CD14-positive monocyte (primary cell): ENCODE measurements at regions of chr7 and their contacts with region 1.

Region 1: GRCh38 chr7:55280031-55280454 is 85.1 kb upstream of the LANCL2 start:
- DNase-seq: peak; percentile 18 to 41 (median 26)
- H3K4me3 ChIP-seq: no peak overlapping the region
- H3K4me3 Mint-ChIP-seq: no peak overlapping the region
- H3K27ac ChIP-seq: no peak overlapping the region
- H3K27ac Mint-ChIP-seq: no peak overlapping the region
- H3K4me1 ChIP-seq: no peaks in the 10 kb centered on the region
- H3K4me1 Mint-ChIP-seq: no peaks in the 10 kb centered on the region
- H3K27me3 ChIP-seq: no peaks in the 10 kb centered on the region
- H3K27me3 Mint-ChIP-seq: peaks cover 0 to 5% (median 0%) of the 10 kb centered on the region in 3 donors
- CTCF ChIP-seq: peak; percentile 58

Region 2: DNA sequence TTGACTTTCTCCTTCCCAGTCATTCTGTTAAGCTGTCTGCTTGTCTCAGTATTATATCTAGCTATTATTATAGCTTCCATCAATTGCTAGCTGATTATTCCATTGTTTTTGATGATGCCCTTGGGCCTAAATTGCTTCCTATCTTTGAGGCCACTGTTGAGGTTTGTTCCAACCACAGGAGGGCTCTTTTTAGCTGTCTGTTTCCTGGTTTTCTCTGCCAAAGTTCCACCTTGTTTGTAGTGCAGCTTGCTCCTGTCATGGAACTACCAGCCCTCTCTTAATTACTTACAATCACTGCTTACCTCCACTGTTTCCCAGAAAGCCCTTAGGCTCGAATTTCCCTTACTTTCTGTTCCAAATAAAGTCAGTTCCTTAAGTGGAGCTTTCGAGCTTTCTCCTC is 402.4 kb before region 1 on chr7:
- intact Hi-C with region 1: no loop called
- DNase-seq: no peak
- H3K4me3 ChIP-seq: no peak overlapping the region
- H3K4me3 Mint-ChIP-seq: no peak overlapping the region
- H3K27ac ChIP-seq: no peak overlapping the region
- H3K27ac Mint-ChIP-seq: no peak overlapping the region
- H3K4me1 ChIP-seq: no peaks in the 10 kb centered on the region
- H3K4me1 Mint-ChIP-seq: no peaks in the 10 kb centered on the region
- H3K27me3 ChIP-seq: no peaks in the 10 kb centered on the region
- H3K27me3 Mint-ChIP-seq: no peaks in the 10 kb centered on the region
- CTCF ChIP-seq: no peak

Region 3: GRCh38 chr7:55409482-55410225 is 129.6 kb after region 1 on chr7:
- intact Hi-C with region 1: loop called (anchors 2 to 5 kb)
- DNase-seq: no peak
- H3K4me3 ChIP-seq: no peak overlapping the region
- H3K4me3 Mint-ChIP-seq: no peak overlapping the region
- H3K27ac ChIP-seq: peak overlapping the region in 1 of 2 donors; percentile 14
- H3K27ac Mint-ChIP-seq: peak overlapping the region in 1 of 7 donors; percentile 23
- H3K4me1 ChIP-seq: no peaks in the 10 kb centered on the region
- H3K4me1 Mint-ChIP-seq: no peaks in the 10 kb centered on the region
- H3K27me3 ChIP-seq: no peaks in the 10 kb centered on the region
- H3K27me3 Mint-ChIP-seq: peaks cover 0 to 2% (median 0%) of the 10 kb centered on the region in 3 donors
- CTCF ChIP-seq: no peak

Region 4: DNA sequence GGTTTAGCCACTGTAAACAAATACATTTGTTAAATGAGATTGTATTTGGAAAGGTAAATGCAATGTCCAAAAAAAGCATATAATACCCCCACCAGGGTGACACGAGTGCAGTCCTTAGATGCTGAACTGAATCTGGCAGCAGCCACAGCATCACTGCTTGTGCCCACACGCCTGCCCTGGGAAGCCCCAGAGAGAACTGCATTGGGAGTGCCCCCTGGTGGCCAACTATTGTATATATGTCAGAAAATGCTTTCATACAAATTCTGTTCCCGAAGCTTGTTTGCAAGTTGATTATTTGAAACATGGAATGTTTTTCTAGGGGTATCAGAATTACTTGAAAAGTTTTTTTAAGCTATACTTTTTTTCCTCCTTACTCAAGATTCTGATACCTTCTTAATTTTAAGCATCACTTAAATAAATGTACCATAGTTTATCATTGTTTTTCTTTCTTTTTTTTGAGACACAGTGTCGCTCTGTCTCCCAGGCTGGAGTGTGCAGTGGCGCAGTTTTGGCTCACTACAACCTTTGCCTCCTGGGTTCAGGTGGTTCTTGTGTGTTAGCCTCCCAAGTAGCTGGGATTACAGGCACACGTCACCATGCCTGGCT is 135.2 kb after region 1 on chr7:
- intact Hi-C with region 1: loop called (anchors 2 to 5 kb)
- DNase-seq: peak; percentile 47 to 68 (median 68)
- H3K4me3 ChIP-seq: no peak overlapping the region
- H3K4me3 Mint-ChIP-seq: no peak overlapping the region
- H3K27ac ChIP-seq: no peak overlapping the region
- H3K27ac Mint-ChIP-seq: no peak overlapping the region
- H3K4me1 ChIP-seq: no peaks in the 10 kb centered on the region
- H3K4me1 Mint-ChIP-seq: no peaks in the 10 kb centered on the region
- H3K27me3 ChIP-seq: no peaks in the 10 kb centered on the region
- H3K27me3 Mint-ChIP-seq: no peaks in the 10 kb centered on the region
- CTCF ChIP-seq: peak; percentile 85